Activated CD4-positive, alpha-beta T cell treated with anti-CD3 and anti-CD28 coated beads, Interleukin-2, amount 10 ng/mL, durations not matched to agents 24 days and 14 days (primary cell): ENCODE measurements at regions of chr19 and their contacts with region 1.

Region 1: DNA sequence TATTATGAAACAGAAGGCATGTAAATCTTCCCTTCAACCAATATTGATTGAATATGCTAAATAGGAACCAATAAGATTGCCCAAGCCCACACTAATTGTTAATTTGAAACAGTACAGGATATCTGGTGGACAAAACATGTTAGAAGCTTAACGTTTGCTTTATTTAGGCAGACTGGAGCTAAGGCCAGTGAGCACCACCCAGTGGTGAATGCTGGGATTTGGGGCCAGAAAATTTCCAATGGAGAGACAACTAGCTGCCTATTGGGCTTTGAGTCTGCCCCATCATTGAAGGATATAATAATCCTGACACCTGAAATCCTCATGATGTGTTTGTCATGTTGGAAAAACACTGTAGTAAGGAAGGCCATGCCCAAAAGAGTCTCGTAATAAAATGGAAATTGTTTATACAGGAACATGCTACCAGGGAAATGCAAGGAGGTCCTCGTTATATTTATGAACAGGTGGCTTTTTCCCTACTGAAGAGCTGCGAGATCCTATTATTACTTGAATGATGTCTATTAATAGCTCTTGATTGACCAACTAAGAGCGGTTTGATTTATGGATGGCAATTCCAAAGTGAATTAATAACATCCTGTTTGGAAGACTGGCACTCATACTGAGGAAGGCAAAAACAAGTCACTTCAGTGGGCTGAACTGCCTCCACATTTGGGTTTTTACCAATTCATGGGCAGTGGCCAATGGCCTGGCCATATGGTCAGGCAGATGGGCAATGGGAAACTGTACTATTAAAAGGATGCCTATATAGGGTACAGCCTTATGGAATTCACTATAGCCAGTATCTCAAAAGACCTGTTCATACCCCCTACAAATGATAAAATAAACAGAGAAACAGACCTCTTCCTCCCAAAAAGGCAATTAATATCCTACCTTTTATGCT is 8.7 kb downstream of the SIGLECL1 start:
- DNase-seq: peak; percentile 89
- H3K4me3 Mint-ChIP-seq: no peak overlapping the region
- H3K27ac Mint-ChIP-seq: no peak overlapping the region
- H3K4me1 Mint-ChIP-seq: peaks cover 33% of the 10 kb centered on the region
- H3K27me3 Mint-ChIP-seq: peaks cover 16% of the 10 kb centered on the region

Region 2: DNA sequence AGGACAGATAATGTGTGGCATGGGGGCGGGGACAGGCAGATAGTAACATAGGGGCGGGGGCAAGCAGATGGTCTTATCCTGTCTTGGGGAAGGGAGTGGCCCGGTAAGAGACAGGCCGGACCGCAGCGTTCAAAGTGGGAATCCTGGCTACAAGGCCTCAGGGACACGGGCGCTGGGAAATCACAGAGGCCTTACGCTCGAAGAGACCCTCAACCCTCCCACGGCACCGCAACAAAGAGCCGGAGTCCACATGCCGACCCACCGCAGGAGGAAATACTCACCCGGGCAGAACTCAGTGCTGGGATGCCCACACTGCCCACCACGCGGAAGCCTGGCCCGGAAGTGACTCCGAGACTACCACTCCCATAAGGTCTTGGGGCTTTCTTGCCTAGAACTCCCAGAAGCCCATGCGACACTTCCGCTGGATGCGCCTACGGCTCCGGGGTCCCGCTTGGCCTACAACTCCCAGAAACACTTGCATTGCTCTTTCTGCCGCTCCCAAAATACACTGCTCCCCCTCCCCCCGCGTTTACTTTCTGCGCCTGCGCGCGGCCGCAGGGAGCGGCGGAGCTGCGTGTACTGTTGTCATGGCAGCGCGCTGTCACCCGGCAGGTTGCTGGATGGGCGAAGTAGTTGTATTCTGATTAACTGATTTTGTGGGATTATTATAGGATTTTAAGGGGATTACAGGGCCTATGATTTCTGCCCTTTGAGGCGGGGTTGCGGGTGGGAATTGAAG is 151.4 kb before region 1 on chr19 and contains the start of gene CTU1:
- intact Hi-C with region 1: loop called (anchors 5 kb)
- DNase-seq: peak; percentile 99
- H3K4me3 Mint-ChIP-seq: peak within 1 kb of the TSS; percentile 87
- H3K27ac Mint-ChIP-seq: peak within 1 kb of the TSS; percentile 93
- H3K4me1 Mint-ChIP-seq: peaks cover 24% of the 10 kb centered on the region
- H3K27me3 Mint-ChIP-seq: no peaks in the 10 kb centered on the region
- total RNA-seq, gene CTU1: 12.8 and 13.4 TPM in 2 replicates

Region 3: DNA sequence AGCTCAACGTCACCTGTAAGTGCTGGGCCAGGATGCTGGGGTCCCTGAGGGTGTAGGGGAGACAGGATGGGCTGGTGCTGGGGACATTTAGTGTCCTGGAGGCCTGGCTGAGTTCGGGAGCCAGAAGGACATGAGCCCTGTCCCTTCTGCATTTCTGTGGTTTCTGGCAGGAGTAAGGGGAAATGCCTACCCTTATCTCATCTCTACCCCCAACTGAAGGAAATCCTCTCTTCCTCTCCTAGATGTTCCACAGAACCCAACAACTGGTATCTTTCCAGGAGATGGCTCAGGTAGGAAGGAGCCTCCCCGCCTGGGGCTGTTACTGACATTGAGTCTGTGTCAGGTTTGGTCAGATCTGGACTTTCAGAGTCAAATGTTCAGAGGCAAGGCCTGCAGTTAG is 33.5 kb before region 1 on chr19:
- intact Hi-C with region 1: loop called (anchors 2 kb)
- DNase-seq: no peak
- H3K4me3 Mint-ChIP-seq: peak overlapping the region; percentile 80
- H3K27ac Mint-ChIP-seq: peak overlapping the region; percentile 67
- H3K4me1 Mint-ChIP-seq: peaks cover 32% of the 10 kb centered on the region
- H3K27me3 Mint-ChIP-seq: peaks cover 41% of the 10 kb centered on the region